ENCODE measurements at regions of chr4 and their contacts with region 1.

Region 1: GRCh38 chr4:54064295-54065111 is at the start of gene CHIC2:
- DNase-seq: peak; percentile 96
- H3K4me3 Mint-ChIP-seq: peak within 1 kb of the TSS; percentile 84
- H3K27ac Mint-ChIP-seq: peak within 1 kb of the TSS; percentile 94
- H3K4me1 Mint-ChIP-seq: peaks cover 43% of the 10 kb centered on the region
- H3K27me3 Mint-ChIP-seq: no peaks in the 10 kb centered on the region
- total RNA-seq, gene CHIC2: 7.2 to 7.6 TPM

Region 2: GRCh38 chr4:52721968-52722815 is 1342.3 kb before region 1 on chr4:
- CTCF ChIA-PET with region 1: no interaction called
- intact Hi-C with region 1: loop called (anchors 5 kb)
- DNase-seq: peak; percentile 95
- H3K4me3 Mint-ChIP-seq: peak overlapping the region; percentile 79
- H3K27ac Mint-ChIP-seq: peak overlapping the region; percentile 76
- H3K4me1 Mint-ChIP-seq: peaks cover 11% of the 10 kb centered on the region
- H3K27me3 Mint-ChIP-seq: peaks cover 3% of the 10 kb centered on the region

Region 3: DNA sequence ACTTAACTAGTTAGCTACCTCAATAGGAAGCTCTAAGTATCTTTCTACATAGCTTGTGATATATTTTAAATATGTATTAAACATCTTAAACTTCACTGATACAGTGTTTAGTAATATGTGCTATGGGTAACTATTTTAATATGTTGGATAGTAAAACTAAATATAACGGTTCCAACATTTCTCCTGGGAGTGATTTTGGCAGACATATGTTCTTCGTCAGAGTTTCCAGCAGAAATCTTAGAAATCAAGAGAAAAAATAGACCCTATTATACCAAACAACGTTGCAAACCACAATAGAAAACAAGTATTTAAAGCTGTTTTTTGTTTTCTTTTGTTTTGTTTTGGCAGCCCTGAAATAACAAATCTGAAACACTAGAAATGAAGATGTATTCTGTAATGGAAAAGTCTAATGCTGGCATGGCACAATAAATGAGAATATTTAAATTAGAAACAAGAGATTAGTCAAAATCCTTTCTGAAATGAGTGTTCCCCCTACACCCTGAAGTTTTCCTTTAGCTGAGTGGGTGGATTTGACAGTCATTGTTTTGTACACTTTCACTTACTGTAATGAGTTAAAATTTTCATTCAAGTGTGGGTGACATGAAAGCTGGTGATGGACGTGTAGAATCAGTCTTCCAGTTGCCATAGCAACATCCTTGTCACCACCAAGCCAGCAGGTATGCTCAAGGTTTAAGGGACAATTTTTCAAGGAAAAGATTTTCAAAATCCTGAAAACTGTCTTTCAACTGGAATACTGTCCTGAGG is 932.2 kb before region 1 on chr4:
- CTCF ChIA-PET with region 1: no interaction called
- intact Hi-C with region 1: loop called (anchors 2 kb)
- DNase-seq: peak; percentile 61
- H3K4me3 Mint-ChIP-seq: no peak overlapping the region
- H3K27ac Mint-ChIP-seq: peak overlapping the region; percentile 83
- H3K4me1 Mint-ChIP-seq: peaks cover 36% of the 10 kb centered on the region
- H3K27me3 Mint-ChIP-seq: no peaks in the 10 kb centered on the region

Region 4: DNA sequence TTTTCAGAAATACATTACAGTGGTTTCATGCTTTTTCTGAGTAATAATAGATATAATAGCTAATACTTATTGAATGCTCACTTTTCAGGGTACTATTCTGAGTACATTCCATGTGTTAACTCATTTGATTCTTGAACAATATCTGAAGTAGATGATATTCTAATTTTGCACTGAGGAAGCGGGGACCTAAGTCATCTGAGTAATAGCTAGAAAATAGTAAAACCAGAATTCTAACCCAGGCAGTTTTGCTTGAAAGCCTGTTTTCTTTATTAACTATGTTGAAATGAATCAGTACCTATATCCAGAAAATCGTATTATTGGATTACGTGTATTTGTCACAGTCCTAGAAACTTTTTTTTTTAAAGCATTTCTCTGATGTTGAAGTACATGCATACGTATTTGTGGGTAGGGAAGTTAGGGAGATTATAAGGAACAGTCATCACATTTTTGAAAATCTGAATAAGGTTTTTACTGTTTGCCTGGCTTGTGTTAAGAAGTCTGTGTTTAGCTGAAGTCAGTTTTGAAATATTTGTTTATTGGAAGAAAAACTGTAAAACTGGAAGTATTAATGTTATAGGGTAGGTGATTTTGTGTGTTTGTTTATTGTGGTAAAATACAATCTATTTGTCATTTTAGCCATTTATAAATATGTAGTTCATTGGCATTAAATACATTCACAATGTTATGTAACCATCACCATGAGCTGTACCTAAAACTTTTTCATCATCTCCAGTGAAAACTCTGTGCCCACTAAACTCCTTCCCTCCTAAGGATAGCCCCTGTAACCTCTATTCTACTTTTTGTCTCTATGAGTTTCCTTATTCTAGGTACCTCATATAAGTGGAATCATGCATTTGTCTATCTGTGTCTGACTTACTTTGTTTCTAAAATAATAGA is 631.7 kb before region 1 on chr4:
- CTCF ChIA-PET with region 1: no interaction called
- intact Hi-C with region 1: loop called (anchors 2 kb)
- DNase-seq: no peak
- H3K4me3 Mint-ChIP-seq: no peak overlapping the region
- H3K27ac Mint-ChIP-seq: no peak overlapping the region
- H3K4me1 Mint-ChIP-seq: peaks cover 26% of the 10 kb centered on the region
- H3K27me3 Mint-ChIP-seq: no peaks in the 10 kb centered on the region

Region 5: GRCh38 chr4:54041100-54041499 is 23.4 kb before region 1 on chr4:
- CTCF ChIA-PET with region 1: interaction called, 3 read pairs
- intact Hi-C with region 1: loop called (anchors 1 kb)
- DNase-seq: no peak
- H3K4me3 Mint-ChIP-seq: no peak overlapping the region
- H3K27ac Mint-ChIP-seq: no peak overlapping the region
- H3K4me1 Mint-ChIP-seq: peaks cover 44% of the 10 kb centered on the region
- H3K27me3 Mint-ChIP-seq: no peaks in the 10 kb centered on the region

Region 6: GRCh38 chr4:54091637-54092404 is 27.3 kb after region 1 on chr4:
- CTCF ChIA-PET with region 1: no interaction called
- intact Hi-C with region 1: loop called (anchors 1 kb)
- DNase-seq: peak; percentile 74
- H3K4me3 Mint-ChIP-seq: peak overlapping the region; percentile 88
- H3K27ac Mint-ChIP-seq: no peak overlapping the region
- H3K4me1 Mint-ChIP-seq: peaks cover 31% of the 10 kb centered on the region
- H3K27me3 Mint-ChIP-seq: peaks cover 44% of the 10 kb centered on the region

Region 7: DNA sequence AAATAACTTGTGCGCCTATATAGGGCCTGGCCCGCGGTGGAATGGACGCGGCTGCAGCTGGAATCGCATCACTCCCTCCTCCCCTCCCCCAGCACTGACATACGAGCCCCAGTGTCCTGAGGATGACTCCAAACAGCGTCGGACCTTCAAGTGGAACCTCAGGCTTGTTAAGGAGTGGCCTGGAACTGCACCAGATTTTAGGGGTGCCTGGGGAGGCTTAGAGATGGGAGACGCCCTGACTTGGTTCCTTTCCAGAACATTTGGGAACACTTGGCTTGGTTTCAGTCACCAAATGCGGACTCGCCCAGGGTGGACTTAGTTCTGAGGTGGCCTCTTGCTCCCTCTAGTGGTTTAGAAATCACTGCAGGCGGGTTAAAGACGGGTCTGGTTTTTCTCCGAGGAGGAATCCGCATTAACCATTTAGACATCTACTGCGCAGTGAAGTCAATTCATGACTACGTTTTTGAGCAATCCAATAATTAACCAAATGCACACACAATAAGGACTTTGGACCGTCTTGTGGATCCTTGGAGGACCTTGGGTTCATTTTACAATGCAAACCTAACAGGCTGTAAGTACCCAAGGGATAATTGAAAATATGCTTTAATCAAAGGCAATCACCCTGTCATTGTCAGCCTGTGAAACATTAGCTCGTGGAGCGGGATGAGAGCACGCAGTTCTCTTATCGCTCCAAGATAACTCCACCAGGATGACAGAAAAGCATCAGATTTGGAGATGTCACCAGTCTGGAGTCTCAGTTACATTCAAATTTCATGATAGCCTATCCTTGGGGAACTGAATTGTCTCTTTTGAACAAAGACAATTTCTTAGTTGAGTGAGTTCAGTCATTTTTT is 153.4 kb after region 1 on chr4:
- CTCF ChIA-PET with region 1: interaction called, 3 read pairs
- intact Hi-C with region 1: loop called (anchors 5 kb)
- DNase-seq: peak; percentile 70
- H3K4me3 Mint-ChIP-seq: peak overlapping the region; percentile 22
- H3K27ac Mint-ChIP-seq: no peak overlapping the region
- H3K4me1 Mint-ChIP-seq: peaks cover 4% of the 10 kb centered on the region
- H3K27me3 Mint-ChIP-seq: peaks cover 29% of the 10 kb centered on the region